ENCODE measurements at regions of chr17 and their contacts with region 1.

Region 1: DNA sequence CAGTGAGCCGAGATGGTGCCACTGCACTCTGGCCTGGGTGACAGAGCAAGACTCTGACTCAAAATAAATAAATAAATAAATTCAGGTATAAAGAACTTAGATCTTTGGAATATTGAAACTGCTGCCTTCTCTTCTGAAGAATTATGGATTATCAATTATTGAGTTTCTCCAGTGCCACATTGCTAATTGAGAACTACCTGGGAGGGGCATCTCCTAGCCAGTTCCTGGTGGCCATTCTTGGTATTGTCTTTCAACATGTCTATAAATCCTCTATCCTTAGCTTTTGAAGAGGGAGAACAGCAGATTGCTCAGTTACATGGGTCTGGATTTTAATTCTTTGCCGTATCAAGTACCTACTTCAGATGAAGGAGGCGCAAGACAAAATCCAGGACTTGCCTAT is 29.2 kb downstream of the CALCOCO2 start:
- DNase-seq: no peak
- H3K4me3 ChIP-seq: no peak overlapping the region
- H3K27ac ChIP-seq: no peak overlapping the region
- H3K4me1 ChIP-seq: no peaks in the 10 kb centered on the region
- H3K27me3 ChIP-seq: no peaks in the 10 kb centered on the region
- CTCF ChIP-seq: 0 out of 2 replicates have a peak, but pooled peaks have one; percentile 35

Region 2: GRCh38 chr17:48295362-48296288 is 564.4 kb before region 1 on chr17:
- CTCF ChIA-PET with region 1: no interaction called
- POLR2A ChIA-PET with region 1: interaction called, 13 read pairs
- intact Hi-C with region 1: no loop called
- DNase-seq: peak in 1 of 2 experiments; percentile 59
- H3K4me3 ChIP-seq: peak overlapping the region; percentile 13; the same call in 1 of the 2 replicates
- H3K27ac ChIP-seq: peak overlapping the region; percentile 38
- H3K4me1 ChIP-seq: peaks cover 22% of the 10 kb centered on the region
- H3K27me3 ChIP-seq: no peaks in the 10 kb centered on the region
- CTCF ChIP-seq: no peak

Measured in PC-9 (cell line).